A673 (cell line): ENCODE measurements at regions of chr11 and their contacts with region 1.

Region 1: GRCh38 chr11:116791002-116791812 is 472 bp downstream of the APOA5 start:
- DNase-seq: peak; percentile 79
- H3K4me3 ChIP-seq: peak overlapping the region; percentile 13
- H3K27ac ChIP-seq: no peak overlapping the region
- H3K4me1 ChIP-seq: peaks cover 4% of the 10 kb centered on the region
- H3K27me3 ChIP-seq: no peaks in the 10 kb centered on the region
- CTCF ChIP-seq: peak; percentile 99

Region 2: DNA sequence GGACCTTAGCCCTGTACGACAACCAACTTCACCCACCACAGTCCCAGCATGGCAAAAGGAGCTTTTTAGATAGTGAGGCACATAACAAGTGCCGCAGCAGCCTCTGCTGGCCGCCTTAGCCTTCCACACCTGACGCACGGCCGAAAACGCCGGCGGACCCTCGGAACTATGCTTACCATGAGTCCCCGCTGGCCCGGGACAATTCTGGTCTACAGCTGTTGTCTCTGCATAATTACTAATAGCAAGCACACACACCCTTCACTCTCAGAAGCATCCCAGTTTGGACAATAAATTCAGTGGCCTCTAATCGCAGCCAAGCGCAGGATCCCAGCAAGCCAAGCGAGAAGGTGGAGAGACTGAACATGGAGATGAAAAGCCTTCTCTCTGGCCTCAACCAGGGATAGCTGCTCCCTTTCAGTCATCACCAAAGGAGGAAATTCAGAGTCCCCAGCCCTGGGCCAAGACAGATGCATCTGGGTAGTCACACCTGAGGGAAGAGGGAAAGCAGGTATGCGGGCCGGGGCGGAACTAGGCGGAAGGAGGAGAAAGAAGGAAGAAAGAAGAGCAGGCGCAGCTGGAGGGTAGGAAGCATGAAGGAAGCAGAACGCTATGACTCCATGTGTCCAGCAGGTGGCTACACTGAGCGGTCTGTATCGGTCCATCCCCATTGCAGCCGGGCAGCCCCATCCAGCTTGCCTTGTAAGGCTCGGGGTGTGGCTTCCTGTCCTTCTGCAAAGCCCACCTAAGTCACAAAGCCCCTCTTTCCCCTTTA is 58.8 kb before region 1 on chr11:
- CTCF ChIA-PET with region 1: no interaction called
- POLR2A ChIA-PET with region 1: interaction called, 16 read pairs
- intact Hi-C with region 1: no loop called
- DNase-seq: peak; percentile 83
- H3K4me3 ChIP-seq: no peak overlapping the region
- H3K27ac ChIP-seq: no peak overlapping the region
- H3K4me1 ChIP-seq: no peaks in the 10 kb centered on the region
- H3K27me3 ChIP-seq: peaks cover 7% of the 10 kb centered on the region
- CTCF ChIP-seq: peak; percentile 88

Region 3: GRCh38 chr11:116835791-116836631 is 44.8 kb after region 1 on chr11:
- CTCF ChIA-PET with region 1: interaction called, 56 read pairs
- POLR2A ChIA-PET with region 1: no interaction called
- intact Hi-C with region 1: loop called (anchors 1 kb)
- DNase-seq: peak; percentile 98
- H3K4me3 ChIP-seq: peak overlapping the region; percentile 42
- H3K27ac ChIP-seq: peak overlapping the region; percentile 5
- H3K4me1 ChIP-seq: peaks cover 6% of the 10 kb centered on the region
- H3K27me3 ChIP-seq: no peaks in the 10 kb centered on the region
- CTCF ChIP-seq: peak; percentile 95

Region 4: GRCh38 chr11:117107701-117108590 is 316.7 kb after region 1 on chr11:
- CTCF ChIA-PET with region 1: interaction called, 14 read pairs
- POLR2A ChIA-PET with region 1: no interaction called
- intact Hi-C with region 1: loop called (anchors 1 kb)
- DNase-seq: no peak
- H3K4me3 ChIP-seq: no peak overlapping the region
- H3K27ac ChIP-seq: no peak overlapping the region
- H3K4me1 ChIP-seq: peaks cover 7% of the 10 kb centered on the region
- H3K27me3 ChIP-seq: no peaks in the 10 kb centered on the region
- CTCF ChIP-seq: no peak

Region 5: DNA sequence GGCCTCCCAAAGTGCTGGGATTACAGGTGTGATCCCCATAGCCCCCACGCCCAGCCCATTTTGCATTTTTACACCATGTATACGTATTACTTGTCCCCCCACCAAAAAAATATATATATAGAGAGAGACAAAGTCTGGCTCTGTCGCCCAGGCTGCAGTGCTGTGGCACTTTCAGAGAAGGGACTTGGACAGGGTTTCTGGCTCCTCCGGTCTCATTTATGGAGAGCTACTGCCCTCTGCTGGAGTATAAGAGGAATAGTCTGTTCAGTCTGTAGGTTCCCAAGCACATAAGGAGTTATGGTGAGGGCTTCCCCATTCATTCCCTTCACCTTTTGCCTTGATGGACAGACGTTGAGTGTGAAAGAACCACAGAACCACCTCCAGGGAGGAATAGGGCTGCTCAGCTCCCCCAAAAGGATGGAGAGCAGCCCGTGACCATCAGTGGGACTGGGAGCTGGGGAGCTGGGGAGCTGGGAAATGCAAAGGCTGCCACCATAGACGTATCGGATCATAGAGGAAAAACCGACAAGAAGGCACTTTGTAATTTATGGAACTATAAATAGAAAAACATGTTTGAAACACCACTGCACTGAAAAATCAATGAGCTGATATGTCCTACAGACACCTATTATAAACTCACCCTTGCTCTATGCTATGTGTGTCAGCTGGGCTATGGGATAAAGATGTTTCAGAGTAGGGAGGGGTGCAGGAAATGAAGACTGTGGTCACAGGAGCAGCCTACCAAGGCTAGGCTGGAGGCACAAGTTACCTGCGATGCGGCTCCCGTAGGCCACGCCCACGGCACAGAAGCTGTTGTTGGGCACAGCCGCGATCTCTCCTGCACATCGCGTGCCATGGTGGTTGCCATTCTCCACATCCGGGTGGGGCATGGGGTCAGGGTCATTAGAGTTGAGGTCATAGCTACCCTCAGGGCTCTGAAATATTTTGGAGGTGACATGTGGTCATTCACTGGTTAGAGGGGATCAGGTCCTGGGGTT is 435.5 kb after region 1 on chr11:
- CTCF ChIA-PET with region 1: interaction called, 6 read pairs
- POLR2A ChIA-PET with region 1: no interaction called
- intact Hi-C with region 1: loop called (anchors 2 kb)
- DNase-seq: peak; percentile 90
- H3K4me3 ChIP-seq: no peak overlapping the region
- H3K27ac ChIP-seq: no peak overlapping the region
- H3K4me1 ChIP-seq: peaks cover 20% of the 10 kb centered on the region
- H3K27me3 ChIP-seq: no peaks in the 10 kb centered on the region
- CTCF ChIP-seq: peak; percentile 91